CD4-positive, alpha-beta memory T cell (primary cell): ENCODE measurements at regions of chr11 and their contacts with region 1.

Region 1: DNA sequence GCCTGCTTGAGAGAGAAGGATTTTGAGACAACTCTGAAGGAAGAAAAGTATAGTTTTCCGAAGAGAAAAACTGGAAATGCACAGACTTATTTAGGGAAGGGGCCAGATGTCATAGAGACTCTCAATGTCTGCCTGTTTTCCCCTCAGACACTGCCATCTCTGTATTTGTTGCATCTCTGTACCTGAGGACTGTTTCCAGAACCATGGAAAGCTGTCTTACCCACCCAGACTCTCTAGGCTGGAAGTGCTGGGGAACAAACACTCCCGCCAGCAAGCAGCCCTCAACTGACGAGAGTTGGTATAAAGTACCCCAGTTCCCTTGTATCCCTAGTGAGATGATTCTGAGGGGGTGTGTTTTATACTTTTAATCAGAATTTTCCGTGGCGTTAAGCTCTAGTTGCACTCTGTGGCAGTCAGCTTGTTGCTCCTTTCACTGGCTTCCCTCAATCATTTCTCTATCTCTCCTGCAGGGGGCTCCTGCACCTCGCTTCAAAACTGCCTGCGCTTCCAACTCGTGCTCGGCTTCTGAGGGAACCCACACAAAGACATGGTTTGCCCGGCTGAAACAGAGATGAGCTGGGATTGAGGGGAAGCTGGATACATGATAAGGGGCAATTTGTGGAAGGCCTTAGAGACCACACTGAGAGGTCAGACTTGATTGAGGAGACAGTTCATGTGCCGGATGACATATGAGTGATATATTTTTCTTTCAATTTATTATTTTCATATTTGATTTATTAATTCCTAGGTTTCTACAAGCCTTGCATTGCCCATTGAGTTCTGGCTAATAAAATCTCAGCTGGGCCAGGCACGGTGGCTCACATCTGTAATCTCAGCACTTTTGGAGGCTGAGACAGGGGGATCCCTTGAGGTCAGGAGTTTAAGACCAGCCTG is 36.9 kb upstream of the CLPB start:
- DNase-seq: peak; percentile 46 to 66 (median 61)
- H3K4me3 ChIP-seq: no peak overlapping the region
- H3K4me3 Mint-ChIP-seq: peak overlapping the region in 3 of 8 donors; percentile 57 to 68 (median 65)
- H3K27ac ChIP-seq: no peak overlapping the region
- H3K27ac Mint-ChIP-seq: no peak overlapping the region
- H3K4me1 ChIP-seq: no peaks in the 10 kb centered on the region
- H3K4me1 Mint-ChIP-seq: peaks cover 2 to 4% (median 3%) of the 10 kb centered on the region in 4 donors
- H3K27me3 ChIP-seq: no peaks in the 10 kb centered on the region
- H3K27me3 Mint-ChIP-seq: peaks cover 13 to 24% of the 10 kb centered on the region in 2 donors

Region 2: GRCh38 chr11:72460091-72460647 is 11.1 kb before region 1 on chr11:
- CTCF ChIA-PET with region 1: interaction called, 10 read pairs
- POLR2A ChIA-PET with region 1: no interaction called
- intact Hi-C with region 1: no loop called
- DNase-seq: no peak
- H3K4me3 ChIP-seq: no peak overlapping the region
- H3K4me3 Mint-ChIP-seq: no peak overlapping the region
- H3K27ac ChIP-seq: no peak overlapping the region
- H3K27ac Mint-ChIP-seq: peak overlapping the region in 1 of 7 donors; percentile 31
- H3K4me1 ChIP-seq: no peaks in the 10 kb centered on the region
- H3K4me1 Mint-ChIP-seq: no peaks in the 10 kb centered on the region
- H3K27me3 ChIP-seq: no peaks in the 10 kb centered on the region
- H3K27me3 Mint-ChIP-seq: peaks cover 4 to 24% of the 10 kb centered on the region in 2 donors

Region 3: DNA sequence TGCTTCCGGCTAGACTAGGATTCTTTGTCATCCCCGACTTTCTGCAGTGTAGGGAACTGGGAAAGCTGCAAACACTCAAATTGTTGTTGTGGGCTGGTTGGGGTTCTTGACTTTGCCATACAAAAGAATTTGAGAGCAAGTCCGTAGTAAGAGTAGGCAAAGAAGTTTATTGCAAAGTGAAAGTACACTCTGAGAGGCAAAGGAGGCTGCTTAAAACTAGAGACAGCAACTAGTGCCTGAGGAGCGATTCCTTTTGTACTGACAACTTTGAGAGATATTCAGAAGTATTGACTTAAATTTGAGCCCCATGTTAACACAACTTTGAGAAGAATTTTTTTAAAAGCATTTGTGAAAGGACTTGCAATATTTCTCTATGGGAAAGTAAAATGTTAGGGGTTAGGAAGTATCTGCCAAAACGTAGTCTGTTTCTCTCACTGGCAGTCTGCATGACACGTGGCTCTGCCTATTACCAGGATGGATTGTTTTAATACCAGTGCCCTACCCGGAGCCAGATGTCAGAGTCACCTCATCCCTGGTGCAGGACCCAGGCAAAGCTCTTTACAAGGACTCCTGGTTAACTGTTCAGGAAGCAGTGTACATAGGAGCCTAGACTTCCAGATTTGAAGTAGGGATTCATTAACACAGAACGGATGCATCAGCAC is 48.1 kb after region 1 on chr11:
- CTCF ChIA-PET with region 1: interaction called, 12 read pairs
- POLR2A ChIA-PET with region 1: no interaction called
- intact Hi-C with region 1: no loop called
- DNase-seq: peak in 4 of 5 donors; percentile 11 to 38 (median 26)
- H3K4me3 ChIP-seq: peak overlapping the region; percentile 7 to 40
- H3K4me3 Mint-ChIP-seq: peak overlapping the region; percentile 82 to 94 (median 87)
- H3K27ac ChIP-seq: peak overlapping the region; percentile 44
- H3K27ac Mint-ChIP-seq: peak overlapping the region; percentile 84 to 94 (median 91)
- H3K4me1 ChIP-seq: peaks cover 33% of the 10 kb centered on the region
- H3K4me1 Mint-ChIP-seq: peaks cover 32 to 42% (median 38%) of the 10 kb centered on the region in 4 donors
- H3K27me3 ChIP-seq: no peaks in the 10 kb centered on the region
- H3K27me3 Mint-ChIP-seq: no peaks in the 10 kb centered on the region

Region 4: DNA sequence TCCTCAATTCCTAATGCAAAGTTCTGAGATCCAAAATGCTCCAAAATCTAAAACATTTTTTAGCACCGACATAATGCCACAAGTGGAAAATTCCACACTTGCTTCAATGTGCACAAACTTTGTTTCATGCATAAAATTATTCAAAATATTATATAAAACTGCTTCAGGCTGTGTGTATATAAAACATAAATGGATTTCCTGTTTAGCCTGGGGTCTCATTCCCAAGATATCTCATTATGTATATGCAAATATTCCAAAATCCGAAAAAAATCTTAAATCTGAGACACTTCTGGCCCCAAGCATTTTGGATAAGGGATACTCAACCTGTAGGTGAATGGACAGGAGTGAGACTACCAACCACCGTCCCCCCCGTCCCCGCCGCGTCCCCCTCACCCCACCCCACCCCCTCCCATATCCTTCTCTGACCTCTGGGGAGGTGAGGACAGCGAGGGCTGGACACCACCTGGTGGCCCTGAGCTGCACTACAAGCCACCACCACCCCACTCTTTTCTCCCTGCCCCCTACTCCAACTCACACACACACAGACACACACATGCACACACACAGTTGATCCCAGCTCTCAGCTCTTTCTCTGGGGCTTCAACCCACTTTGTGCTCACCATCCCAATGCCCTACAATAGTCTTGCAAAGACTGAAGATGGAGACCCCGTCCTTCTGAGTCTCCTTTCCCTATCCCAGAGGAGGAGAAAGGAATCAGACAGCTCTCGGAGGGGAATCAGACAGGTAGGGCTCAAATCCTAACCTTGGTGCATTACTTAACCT is 102.0 kb after region 1 on chr11:
- CTCF ChIA-PET with region 1: interaction called, 36 read pairs
- POLR2A ChIA-PET with region 1: interaction called, 4 read pairs
- intact Hi-C with region 1: loop called (anchors 1 kb)
- DNase-seq: peak in 3 of 5 donors; percentile 16 to 25 (median 25)
- H3K4me3 ChIP-seq: no peak overlapping the region
- H3K4me3 Mint-ChIP-seq: no peak overlapping the region
- H3K27ac ChIP-seq: no peak overlapping the region
- H3K27ac Mint-ChIP-seq: peak overlapping the region in 1 of 7 donors; percentile 15
- H3K4me1 ChIP-seq: no peaks in the 10 kb centered on the region
- H3K4me1 Mint-ChIP-seq: peaks cover 0 to 11% (median 1%) of the 10 kb centered on the region in 4 donors
- H3K27me3 ChIP-seq: no peaks in the 10 kb centered on the region
- H3K27me3 Mint-ChIP-seq: peaks cover 6 to 10% of the 10 kb centered on the region in 2 donors

Region 5: GRCh38 chr11:72642884-72643511 is 171.7 kb after region 1 on chr11:
- CTCF ChIA-PET with region 1: interaction called, 14 read pairs
- POLR2A ChIA-PET with region 1: no interaction called
- intact Hi-C with region 1: loop called (anchors 1 kb)
- DNase-seq: peak in 4 of 5 donors; percentile 66 to 75 (median 67)
- H3K4me3 ChIP-seq: peak overlapping the region in 1 of 2 donors; percentile 47
- H3K4me3 Mint-ChIP-seq: peak overlapping the region in 5 of 8 donors; percentile 10 to 76 (median 47)
- H3K27ac ChIP-seq: no peak overlapping the region
- H3K27ac Mint-ChIP-seq: no peak overlapping the region
- H3K4me1 ChIP-seq: no peaks in the 10 kb centered on the region
- H3K4me1 Mint-ChIP-seq: peaks cover 0 to 9% (median 0%) of the 10 kb centered on the region in 4 donors
- H3K27me3 ChIP-seq: peaks cover 11% of the 10 kb centered on the region
- H3K27me3 Mint-ChIP-seq: peaks cover 3% of the 10 kb centered on the region in 2 donors